Heart right ventricle (tissue), 16 donors: ENCODE measurements at regions of chr9 and their contacts with region 1.

Region 1: DNA sequence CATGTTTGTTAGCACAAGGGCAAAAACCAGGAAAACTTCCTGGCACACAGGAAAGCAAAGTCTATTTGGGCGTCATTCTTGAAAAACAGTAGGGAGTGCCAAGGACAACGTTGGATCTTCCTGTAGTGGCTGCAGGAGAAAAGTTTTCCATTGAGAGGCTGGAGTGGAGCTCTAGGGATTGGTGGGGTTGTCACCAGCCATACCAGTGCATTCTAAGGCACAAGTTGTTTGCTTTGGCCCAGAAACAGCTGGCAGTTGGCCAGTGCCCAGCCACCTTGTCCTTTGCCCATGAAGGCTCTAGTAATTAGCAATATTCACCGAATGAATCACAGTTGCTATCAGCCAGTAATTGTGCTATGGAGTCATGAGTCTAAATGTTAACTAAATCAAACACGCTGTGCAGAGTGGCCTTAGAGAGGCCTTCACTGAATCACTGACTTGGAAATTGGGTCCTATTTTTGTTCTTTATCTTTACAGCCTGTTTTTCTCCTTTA is 26.4 kb downstream of the TNFSF15 start:
- DNase-seq: peak; percentile 14 to 27
- ATAC-seq: peak in 4 of 8 donors; percentile 48 to 76 (median 54)
- H3K4me3 ChIP-seq: no peak overlapping the region
- H3K27ac ChIP-seq: no peak overlapping the region
- H3K4me1 ChIP-seq: no peaks in the 10 kb centered on the region
- H3K27me3 ChIP-seq: peaks cover 0 to 23% (median 8%) of the 10 kb centered on the region in 7 donors
- CTCF ChIP-seq: no peak

Region 2: GRCh38 chr9:113511856-113512761 is 1267.3 kb before region 1 on chr9:
- intact Hi-C with region 1: loop called in 1 of 10 experiments (anchors 10 kb)
- DNase-seq: no peak
- ATAC-seq: no peak
- H3K4me3 ChIP-seq: no peak overlapping the region
- H3K27ac ChIP-seq: peak overlapping the region in 8 of 10 donors; percentile 24 to 96 (median 74)
- H3K4me1 ChIP-seq: peaks cover 11 to 66% (median 45%) of the 10 kb centered on the region in 9 donors
- H3K27me3 ChIP-seq: no peaks in the 10 kb centered on the region
- CTCF ChIP-seq: no peak